Activated T-helper 1 cell treated with anti-CD3 and anti-CD28 coated beads, Interleukin-12 subunit alpha, Interleukin-12 subunit beta, Interleukin-2, Interleukin-4 antibody, amounts not matched to agents 30 ng/mL and 10 ng/mL and 1 ng/mL, durations not matched to agents 14 hours and 24 hours and 36 hours (primary cell): ENCODE measurements at regions of chr1 and their contacts with region 1.

Region 1: GRCh38 chr1:46340404-46341221 is at the start of gene NSUN4:
- DNase-seq: peak; percentile 83
- H3K4me3 Mint-ChIP-seq: peak within 1 kb of the TSS; percentile 100
- H3K27ac Mint-ChIP-seq: peak within 1 kb of the TSS; percentile 100
- H3K4me1 Mint-ChIP-seq: peaks cover 39% of the 10 kb centered on the region
- H3K27me3 Mint-ChIP-seq: no peaks in the 10 kb centered on the region
- total RNA-seq, gene NSUN4: 37.6 and 39.6 TPM in 2 replicates

Region 2: DNA sequence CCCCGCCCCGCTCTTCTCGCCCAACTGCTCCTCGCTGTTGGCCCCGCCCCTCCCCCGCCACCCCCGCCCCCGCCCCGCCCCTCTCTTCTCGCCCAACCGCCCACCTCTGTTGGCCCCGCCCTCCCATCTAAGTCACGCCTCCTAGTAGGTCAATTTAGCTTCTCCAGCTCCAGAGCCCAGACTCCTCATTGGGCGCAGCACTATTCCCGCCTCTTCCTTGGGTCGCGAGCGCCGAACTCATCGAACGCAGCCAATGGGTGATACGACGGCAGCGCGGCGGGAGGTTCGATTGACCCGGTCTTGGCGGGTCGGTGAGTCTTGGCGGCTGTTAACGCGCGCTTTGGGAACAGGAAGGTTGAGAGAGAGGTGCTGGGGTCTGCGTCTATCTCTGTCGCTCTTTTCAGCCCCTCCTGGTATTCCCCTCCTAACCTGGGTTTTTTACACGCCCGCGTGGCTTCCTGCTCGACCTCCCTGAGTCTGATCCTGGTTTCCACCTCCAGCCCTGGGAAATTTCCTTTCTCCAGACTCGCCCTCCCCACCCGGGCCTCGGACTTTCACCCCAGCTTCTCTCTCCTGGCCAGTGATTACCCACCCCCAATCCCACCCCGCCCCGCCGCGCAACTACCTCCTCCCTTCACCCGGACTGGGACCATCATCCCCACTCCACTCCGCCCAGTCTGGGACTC is 93.0 kb before region 1 on chr1 and contains the start of gene RAD54L:
- intact Hi-C with region 1: loop called (anchors 1 kb)
- DNase-seq: peak; percentile 95
- H3K4me3 Mint-ChIP-seq: peak within 1 kb of the TSS; percentile 97
- H3K27ac Mint-ChIP-seq: peak within 1 kb of the TSS; percentile 94
- H3K4me1 Mint-ChIP-seq: peaks cover 39% of the 10 kb centered on the region
- H3K27me3 Mint-ChIP-seq: no peaks in the 10 kb centered on the region
- total RNA-seq, gene RAD54L: 49.7 and 50.2 TPM in 2 replicates